Right ventricle myocardium inferior (tissue), 1 donor: ENCODE measurements at regions of chr20 and their contacts with region 1.

Region 1: DNA sequence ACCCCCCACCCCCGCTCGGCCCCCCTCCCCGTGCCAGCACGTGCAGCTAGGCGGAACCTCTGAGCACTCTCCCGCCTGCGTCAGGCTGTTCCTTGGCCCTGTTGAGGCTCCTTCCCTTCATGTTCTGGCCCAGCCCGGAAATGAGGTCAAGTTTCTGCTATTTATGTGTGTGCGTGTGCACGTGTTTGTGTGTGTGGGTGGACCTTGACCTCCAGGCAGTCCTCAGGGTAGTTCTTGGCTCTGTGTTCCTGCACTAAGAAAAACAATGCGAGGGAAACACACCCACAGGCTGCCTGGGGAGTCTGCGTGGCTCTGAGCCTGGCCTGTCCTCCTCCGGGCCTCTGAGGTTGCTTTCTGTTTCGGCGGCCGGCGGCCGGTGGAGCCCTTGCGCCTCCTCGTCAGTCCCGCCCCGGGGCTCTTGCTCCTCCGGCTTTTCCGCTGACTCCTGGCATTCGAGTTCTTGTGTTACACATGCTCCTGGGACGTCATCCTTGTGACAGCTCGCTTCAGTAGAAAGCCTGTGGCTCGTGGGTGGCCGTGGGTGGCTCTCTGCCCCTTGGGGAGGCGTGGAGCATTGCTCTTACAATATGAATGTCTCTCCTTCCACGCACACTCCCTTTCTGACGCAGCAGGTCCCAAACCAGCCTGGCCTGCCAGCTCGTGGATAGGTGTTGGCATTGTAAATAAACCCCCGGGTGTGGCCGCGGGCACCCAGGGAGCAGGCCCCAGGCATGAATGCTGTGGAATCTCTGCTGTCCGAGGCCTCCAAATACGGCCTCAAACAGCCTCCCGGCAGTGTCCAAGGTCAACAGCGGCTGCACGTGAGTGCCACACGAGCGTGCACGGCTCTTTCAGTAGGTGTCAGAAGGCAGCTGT is 10.0 kb downstream of the SLCO4A1 start:
- DNase-seq: peak; percentile 94
- ATAC-seq: peak; percentile 96

Region 2: DNA sequence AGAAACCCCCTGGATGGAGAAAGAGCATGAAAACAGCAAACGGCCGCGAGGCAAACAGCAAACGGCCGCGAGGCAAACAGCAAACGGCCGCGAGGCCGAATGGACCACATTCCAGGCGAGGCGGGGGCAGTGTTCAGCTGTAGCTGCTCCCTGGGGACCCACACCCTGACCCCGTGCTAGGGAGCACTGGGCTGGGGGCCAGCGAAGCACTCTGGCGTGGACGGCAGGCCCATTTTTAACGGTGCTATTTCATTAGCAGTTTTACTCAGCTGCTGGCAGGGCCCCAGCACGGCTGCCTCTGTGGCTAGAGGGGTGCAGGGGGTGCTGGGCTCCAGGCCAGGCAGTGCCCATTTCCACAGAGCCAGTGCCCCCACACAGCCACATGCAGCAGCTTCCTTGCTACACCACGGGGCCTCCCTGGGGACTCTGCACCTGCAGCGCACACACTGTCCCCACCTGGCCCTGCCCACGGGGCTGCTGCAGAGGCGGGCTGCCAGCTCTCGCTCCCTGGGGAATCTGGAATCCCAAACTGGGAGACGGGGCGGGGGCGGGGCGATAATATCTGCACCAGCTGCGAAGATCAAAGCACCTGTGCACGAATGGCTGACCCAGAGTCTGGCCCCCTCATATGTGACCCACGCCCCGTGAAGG is 45.6 kb before region 1 on chr20:
- intact Hi-C with region 1: no loop called
- DNase-seq: peak; percentile 81
- ATAC-seq: peak; percentile 32

Region 3: GRCh38 chr20:62616728-62617621 is 35.3 kb before region 1 on chr20:
- intact Hi-C with region 1: loop called (anchors 5 kb)
- DNase-seq: peak; percentile 91
- ATAC-seq: peak; percentile 84

Region 4: DNA sequence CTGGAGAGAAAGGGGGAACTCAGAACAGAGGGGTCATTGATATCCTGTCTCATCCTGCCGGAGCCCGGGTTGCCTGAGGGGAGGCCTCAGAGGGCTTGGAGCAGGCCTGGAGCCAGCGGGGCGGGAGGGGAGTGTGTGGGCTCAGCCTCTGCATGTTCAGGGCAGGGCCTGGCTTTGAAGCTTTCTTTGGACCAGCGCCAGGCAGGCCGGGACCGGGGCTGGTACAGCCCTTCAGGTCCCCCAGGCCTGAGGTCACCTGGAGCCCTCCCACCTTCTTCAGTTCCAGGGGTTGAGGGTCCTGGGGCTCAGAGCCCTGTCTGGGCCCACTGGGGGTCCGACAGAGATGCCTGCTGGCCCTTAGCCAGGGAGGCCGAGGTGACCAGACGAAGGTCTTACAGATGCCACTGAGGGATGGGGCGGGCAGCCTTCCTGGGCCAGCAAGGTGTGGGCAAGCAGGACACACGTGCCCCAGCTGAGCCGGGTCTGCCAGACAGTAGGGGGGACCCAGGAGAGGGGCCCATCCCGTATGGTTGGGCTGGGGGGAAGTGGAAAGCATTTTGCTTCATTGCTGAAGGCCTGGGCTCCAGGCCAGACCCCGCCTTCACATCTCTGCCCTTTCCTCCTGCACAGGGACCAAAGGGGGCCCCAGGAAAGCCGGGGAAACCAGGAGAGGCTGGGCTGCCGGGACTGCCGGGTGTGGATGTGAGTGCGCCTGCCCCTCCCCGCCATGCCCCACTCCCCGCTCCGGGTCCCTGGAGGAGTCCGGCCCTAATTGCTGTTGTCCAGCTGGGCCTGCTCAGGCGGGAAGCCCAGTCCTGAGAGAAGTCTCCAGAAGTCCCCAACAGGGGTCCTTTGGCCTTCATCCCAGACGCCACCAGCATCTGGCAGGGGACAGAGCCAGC is 166.6 kb after region 1 on chr20:
- intact Hi-C with region 1: no loop called
- DNase-seq: peak; percentile 82
- ATAC-seq: peak; percentile 68